Right ventricle myocardium superior (tissue), 1 donor: ENCODE measurements at regions of chr1 and their contacts with region 1.

Region 1: DNA sequence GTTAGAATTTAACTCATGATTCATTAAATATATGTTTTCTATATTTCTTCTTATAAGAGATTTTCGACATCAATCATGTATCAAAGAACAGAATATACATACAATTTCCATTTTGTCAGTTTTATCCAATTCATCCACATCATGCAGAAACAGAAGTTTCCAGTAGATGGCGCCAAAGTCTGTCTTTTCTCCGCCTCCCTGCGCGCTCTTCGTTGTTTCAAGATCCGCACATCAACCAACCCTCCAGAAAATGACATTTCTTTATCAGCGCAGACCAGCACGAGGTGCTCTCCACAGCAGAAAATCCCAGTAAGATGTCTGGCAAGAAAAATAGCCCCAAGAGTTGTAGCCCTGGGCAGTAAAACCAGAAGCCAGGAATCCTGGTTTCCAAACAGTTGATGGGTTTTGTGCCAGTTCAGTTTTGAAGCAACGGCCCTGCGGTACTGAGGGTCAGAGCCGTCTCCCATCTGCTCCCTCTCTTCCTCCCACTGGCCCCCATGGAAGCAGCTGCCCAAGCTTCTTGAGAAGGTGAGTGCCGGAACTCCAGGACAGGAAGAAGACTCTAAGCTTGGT is 38.6 kb upstream of the GPR137B start:
- DNase-seq: no peak
- ATAC-seq: peak; percentile 76

Region 2: DNA sequence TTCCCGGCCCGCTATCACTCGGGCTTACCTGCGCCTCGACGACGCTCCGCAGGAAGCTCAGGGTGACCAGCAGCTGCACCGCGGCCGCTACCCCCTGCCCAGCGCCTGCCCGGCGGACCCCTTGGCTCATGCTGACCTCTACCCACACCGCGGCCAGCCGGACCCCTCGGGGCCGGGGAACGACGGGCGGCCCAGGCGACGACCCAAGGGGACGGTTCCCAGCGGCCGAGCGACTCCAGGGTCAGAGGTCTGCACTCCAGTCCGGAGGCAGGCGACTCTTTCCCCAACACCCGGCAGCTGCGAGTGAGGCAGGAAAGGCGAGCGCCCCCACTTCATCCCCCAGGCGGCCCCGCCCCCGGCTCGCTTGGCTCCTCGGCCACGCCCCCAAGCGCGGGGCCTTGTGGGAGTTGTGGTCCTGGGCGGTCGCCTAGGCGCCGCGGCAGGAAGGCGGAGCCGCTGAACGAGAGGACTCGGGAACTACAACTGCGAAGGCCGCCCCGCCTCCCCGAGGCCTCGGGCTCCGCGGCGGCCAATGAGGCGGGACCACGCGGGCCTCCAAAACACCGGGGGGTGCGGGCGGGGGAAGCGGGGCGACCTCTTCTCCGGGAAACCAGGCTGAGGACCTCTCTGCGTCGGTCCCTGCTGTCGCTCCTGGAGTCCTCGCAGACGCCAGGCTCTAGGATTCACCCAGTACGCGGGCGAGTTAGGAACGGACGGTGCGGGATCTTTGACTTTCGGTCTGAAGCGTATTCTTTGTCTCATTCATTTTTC is 178.1 kb after region 1 on chr1 and contains the start of gene ERO1B:
- intact Hi-C with region 1: loop called (anchors 5 kb)
- DNase-seq: peak; percentile 99
- ATAC-seq: peak; percentile 100
- total RNA-seq, gene ERO1B: 5.0 TPM

Region 3: DNA sequence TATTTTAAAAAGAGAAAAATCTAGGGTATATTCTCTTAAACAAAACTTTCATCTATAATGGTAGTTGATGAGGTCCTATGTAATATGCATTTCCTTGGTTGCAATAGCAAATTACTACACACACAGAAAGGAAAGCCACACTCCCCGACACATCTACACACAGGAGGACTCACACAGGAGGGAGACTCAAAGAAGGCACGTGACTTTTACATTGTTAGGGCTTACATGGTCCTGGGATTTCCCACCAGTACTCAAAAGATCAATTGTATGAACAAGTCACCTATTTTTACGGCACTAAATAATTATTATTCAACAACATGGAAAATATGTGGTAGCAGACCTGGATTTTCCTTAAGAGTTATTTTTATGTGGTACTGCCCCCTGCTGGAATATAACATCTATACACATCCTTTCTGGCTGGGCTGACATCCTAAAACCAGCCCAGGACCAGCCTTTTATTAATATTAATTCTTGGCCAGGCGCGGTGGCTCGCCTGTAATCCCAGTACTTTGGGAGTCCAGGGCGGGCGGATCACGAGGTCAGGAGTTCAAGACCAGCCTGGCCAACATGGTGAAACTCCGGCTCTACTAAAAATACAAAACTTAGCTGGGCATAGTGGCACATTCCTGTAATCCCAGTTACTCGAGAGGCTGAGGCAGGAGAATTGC is 386.1 kb after region 1 on chr1:
- intact Hi-C with region 1: loop called (anchors 5 kb)
- DNase-seq: no peak
- ATAC-seq: peak; percentile 65

Region 4: GRCh38 chr1:236534151-236534651 is 430.5 kb after region 1 on chr1:
- intact Hi-C with region 1: loop called (anchors 10 kb)
- DNase-seq: no peak
- ATAC-seq: no peak